Ovary (tissue), 10 donors: ENCODE measurements at regions of chr21 and their contacts with region 1.

Region 1: DNA sequence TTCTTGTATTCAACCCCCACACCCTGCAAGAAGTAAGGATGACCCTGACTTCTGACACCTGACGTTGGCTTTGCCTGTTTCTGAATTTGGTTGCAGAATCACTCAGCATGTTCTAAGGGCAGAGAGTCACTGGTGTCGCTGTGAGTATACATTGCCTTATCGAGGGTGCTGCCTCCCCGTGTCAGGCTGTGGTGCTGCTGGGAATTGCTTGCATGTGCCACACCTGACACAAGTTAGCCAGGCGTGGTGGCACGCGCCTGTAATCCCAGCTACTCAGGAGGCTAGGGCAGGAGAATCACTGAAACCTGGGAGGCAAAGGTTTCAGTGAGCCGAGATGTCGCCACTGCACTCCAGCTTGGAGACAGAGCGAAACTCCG is 45.9 kb downstream of the WDR4 start:
- DNase-seq: no peak
- H3K4me3 ChIP-seq: no peak overlapping the region
- H3K27ac ChIP-seq: no peak overlapping the region
- H3K4me1 ChIP-seq: peaks cover 2% of the 10 kb centered on the region
- H3K27me3 ChIP-seq: no peaks in the 10 kb centered on the region
- CTCF ChIP-seq: no peak
- EP300 ChIP-seq: no peak
- POLR2A ChIP-seq: no peak

Region 2: GRCh38 chr21:42601656-42602055 is 231.8 kb before region 1 on chr21:
- intact Hi-C with region 1: loop called in 1 of 4 experiments (anchors 5 kb)
- DNase-seq: no peak
- H3K4me3 ChIP-seq: no peak overlapping the region
- H3K27ac ChIP-seq: no peak overlapping the region
- H3K4me1 ChIP-seq: no peaks in the 10 kb centered on the region
- H3K27me3 ChIP-seq: no peaks in the 10 kb centered on the region
- CTCF ChIP-seq: no peak
- EP300 ChIP-seq: no peak
- POLR2A ChIP-seq: no peak